Caco-2 (cell line): ENCODE measurements at regions of chr7 and their contacts with region 1.

Region 1: DNA sequence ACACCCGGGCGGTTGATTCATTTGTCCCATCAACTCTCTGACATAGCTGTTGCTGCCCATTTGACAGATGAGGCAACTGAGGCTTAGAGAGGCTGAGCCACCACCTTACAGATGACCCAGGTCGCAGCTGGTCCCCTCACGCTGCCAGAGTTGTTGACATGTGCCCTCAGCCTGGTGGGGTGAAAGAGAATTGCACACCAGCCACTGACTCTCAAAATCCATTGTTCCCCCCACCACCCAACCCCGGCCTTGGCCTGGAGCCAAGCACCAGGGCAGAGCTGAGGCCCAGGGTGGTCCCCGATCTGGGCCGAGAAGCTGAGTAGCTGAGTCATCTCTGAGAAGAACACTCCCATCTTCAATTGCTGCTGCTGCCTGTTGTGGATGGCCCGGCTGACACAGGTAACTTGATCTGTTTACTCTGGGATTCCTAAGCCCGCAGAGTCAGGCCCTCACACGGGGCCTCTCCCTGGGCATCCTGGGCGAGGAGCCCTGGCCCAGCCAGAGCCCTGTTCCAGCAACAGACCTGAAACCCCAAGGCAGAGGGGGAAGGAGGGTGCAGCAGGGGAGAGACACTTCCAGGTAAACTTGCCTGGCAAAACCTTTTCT is 27.5 kb downstream of the PVRIG start:
- DNase-seq: peak; percentile 83 to 90
- H3K4me3 ChIP-seq: no peak overlapping the region
- H3K4me3 Mint-ChIP-seq: peak overlapping the region; percentile 59
- H3K27ac Mint-ChIP-seq: peak overlapping the region; percentile 97
- H3K4me1 ChIP-seq: peaks cover 16% of the 10 kb centered on the region
- H3K4me1 Mint-ChIP-seq: peaks cover 19% of the 10 kb centered on the region
- H3K27me3 ChIP-seq: no peaks in the 10 kb centered on the region
- H3K27me3 Mint-ChIP-seq: no peaks in the 10 kb centered on the region
- CTCF ChIP-seq: peak; percentile 10 to 31

Region 2: DNA sequence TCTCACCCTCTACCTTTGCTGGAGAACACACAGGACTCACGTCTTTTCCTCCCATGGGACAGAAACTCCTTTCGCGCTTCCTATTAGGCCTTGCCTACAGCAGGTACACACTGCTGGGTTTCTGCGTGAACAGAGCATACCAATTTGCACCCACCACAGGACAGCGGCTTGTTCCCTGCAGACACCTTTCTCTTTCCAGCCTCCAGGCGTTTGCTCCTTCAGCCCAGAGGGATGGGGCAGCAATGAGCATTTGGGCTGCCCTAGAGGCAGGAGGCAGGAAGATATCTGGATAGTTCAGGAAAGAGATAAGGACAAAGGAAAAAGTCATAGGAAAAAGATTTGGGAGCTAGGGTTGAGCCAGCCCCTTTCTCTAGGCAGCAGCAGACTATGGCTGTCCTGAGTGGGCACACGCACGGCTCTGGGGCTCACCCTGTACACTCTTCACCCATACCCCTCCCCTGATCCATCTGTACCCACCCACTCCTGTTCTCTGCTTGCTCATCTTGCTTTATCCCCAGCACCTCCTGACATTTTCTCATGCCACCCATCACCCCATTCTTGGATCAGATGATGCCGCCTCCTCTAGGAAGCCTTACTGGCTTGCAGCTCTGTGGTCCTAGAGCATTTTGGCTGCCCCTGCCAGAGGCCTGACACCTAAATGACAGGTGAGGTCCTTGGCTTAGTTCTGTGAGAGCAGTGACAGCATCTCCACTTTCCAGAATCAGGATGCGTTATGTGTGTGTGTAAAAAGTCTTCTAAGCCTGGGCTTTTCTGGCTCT is 19.5 kb after region 1 on chr7:
- CTCF ChIA-PET with region 1: interaction called, 4 read pairs
- POLR2A ChIA-PET with region 1: no interaction called
- intact Hi-C with region 1: loop called (anchors 2 kb)
- DNase-seq: peak in 1 of 2 experiments; percentile 50
- H3K4me3 ChIP-seq: no peak overlapping the region
- H3K4me3 Mint-ChIP-seq: peak overlapping the region; percentile 25
- H3K27ac Mint-ChIP-seq: peak overlapping the region; percentile 62
- H3K4me1 ChIP-seq: peaks cover 36% of the 10 kb centered on the region
- H3K4me1 Mint-ChIP-seq: peaks cover 24% of the 10 kb centered on the region
- H3K27me3 ChIP-seq: no peaks in the 10 kb centered on the region
- H3K27me3 Mint-ChIP-seq: no peaks in the 10 kb centered on the region
- CTCF ChIP-seq: no peak

Region 3: GRCh38 chr7:100428199-100428966 is 181.1 kb after region 1 on chr7 and contains the start of gene ZCWPW1:
- CTCF ChIA-PET with region 1: no interaction called
- POLR2A ChIA-PET with region 1: no interaction called
- intact Hi-C with region 1: no loop called
- DNase-seq: peak; percentile 96 to 97
- H3K4me3 ChIP-seq: peak within 1 kb of the TSS; percentile 88
- H3K4me3 Mint-ChIP-seq: peak within 1 kb of the TSS; percentile 89
- H3K27ac Mint-ChIP-seq: peak within 1 kb of the TSS; percentile 99
- H3K4me1 ChIP-seq: 0 out of 2 replicates have a peak, but pooled peaks cover 10% of the 10 kb centered on the region
- H3K4me1 Mint-ChIP-seq: peaks cover 7% of the 10 kb centered on the region
- H3K27me3 ChIP-seq: no peaks in the 10 kb centered on the region
- H3K27me3 Mint-ChIP-seq: peaks cover 4% of the 10 kb centered on the region
- CTCF ChIP-seq: no peak
- total RNA-seq, gene ZCWPW1: 3.4 and 4.4 TPM in 2 replicates